Mammary epithelial cell (primary cell): ENCODE measurements at regions of chr9 and their contacts with region 1.

Region 1: DNA sequence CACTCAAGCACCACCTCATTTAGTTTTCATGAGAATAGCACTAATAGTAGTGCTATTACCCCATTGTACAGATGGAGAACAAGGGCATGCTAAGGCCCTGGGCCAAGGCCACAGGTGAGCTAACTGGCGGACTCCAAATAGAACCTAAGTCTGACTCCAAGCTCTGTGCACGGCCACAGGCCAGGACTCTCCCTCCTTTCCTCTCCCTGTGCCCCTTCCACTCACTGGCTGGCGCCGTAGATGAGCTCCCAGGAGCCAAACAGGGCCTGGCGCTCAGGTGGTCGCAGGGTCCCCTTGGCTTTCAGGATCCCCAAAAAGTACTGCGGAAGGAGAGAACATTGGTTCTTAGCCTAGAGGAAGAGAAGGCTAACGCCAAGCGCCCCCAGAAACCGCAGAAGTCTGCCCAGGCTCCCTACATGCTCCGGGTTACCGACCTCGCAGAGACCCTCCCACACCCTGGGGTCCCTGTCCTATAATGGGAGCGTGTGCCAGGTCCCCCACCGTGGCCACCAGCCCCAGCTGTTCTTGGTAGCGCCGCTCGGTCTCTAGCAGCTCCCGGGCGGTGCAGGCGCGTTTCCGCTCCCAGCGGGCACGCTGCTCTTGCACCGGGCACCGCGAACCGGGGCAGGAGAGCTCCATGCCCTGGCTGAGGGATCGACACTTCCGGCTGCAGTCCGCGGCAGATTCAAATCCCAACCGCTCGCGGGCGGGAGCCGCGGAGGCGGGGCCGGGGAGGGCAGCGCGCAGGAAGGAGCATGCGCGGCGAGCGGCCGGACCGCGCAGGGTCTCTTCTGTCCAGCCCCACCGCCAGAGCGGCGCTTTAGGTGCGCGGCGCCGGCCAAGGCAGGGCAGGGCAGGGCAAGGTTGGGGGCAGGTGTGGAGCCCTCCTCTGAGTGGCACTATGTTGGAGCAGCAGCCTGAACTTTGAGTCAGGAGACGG is at the start of gene ARHGEF39:
- DNase-seq: peak; percentile 79
- H3K4me3 ChIP-seq: peak within 1 kb of the TSS; percentile 32 to 77 (median 63)
- H3K27ac ChIP-seq: peak within 1 kb of the TSS; percentile 50
- H3K4me1 ChIP-seq: peaks cover 39% of the 10 kb centered on the region
- H3K27me3 ChIP-seq: no peaks in the 10 kb centered on the region
- CTCF ChIP-seq: peak in 1 of 2 donors; percentile 16
- total RNA-seq, gene ARHGEF39: 0.33 to 5.7 TPM

Region 2: DNA sequence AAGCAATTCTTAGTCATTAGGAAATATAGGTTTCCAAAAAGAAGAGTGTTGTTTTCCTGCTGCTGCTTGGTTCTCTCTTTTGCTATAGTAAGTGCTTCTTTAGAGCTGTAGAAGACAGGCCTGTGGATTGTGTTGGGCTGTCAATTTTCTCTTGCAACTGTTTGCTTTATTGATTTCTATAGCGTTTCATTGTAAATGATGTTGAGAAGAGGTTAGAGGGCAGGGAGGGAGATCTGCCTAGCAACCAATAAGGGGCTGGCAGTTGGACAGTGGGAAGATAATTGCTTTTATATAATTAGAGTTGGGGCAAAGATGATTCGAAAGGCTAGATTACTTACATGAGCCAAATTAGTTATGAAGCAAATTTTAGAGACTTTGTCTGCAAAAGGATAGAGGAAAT is 491.9 kb before region 1 on chr9:
- CTCF ChIA-PET with region 1: no interaction called
- dilution Hi-C with region 1: no loop called
- in situ Hi-C with region 1: no loop called
- intact Hi-C with region 1: no loop called
- DNase-seq: no peak
- H3K4me3 ChIP-seq: no peak overlapping the region
- H3K27ac ChIP-seq: no peak overlapping the region
- H3K4me1 ChIP-seq: no peaks in the 10 kb centered on the region
- H3K27me3 ChIP-seq: no peaks in the 10 kb centered on the region
- CTCF ChIP-seq: no peak

Region 3: GRCh38 chr9:35616681-35617459 is 47.9 kb before region 1 on chr9:
- CTCF ChIA-PET with region 1: no interaction called
- dilution Hi-C with region 1: no loop called
- in situ Hi-C with region 1: no loop called
- intact Hi-C with region 1: no loop called
- DNase-seq: peak; percentile 40
- H3K4me3 ChIP-seq: peak overlapping the region in 2 of 3 experiments; percentile 17 to 39
- H3K27ac ChIP-seq: no peak overlapping the region
- H3K4me1 ChIP-seq: no peaks in the 10 kb centered on the region
- H3K27me3 ChIP-seq: peaks cover 2% of the 10 kb centered on the region
- CTCF ChIP-seq: no peak

Region 4: DNA sequence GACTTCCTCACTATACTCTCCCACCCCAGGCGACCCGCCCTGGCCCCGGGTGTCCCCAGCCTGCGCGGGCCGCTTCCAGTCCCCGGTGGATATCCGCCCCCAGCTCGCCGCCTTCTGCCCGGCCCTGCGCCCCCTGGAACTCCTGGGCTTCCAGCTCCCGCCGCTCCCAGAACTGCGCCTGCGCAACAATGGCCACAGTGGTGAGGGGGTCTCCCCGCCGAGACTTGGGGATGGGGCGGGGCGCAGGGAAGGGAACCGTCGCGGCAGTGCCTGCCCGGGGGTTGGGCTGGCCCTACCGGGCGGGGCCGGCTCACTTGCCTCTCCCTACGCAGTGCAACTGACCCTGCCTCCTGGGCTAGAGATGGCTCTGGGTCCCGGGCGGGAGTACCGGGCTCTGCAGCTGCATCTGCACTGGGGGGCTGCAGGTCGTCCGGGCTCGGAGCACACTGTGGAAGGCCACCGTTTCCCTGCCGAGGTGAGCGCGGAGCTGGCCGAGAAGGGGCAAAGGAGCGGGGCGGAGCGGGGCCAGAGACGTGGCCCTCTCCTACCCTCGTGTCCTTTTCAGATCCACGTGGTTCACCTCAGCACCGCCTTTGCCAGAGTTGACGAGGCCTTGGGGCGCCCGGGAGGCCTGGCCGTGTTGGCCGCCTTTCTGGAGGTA is 11.1 kb after region 1 on chr9:
- CTCF ChIA-PET with region 1: no interaction called
- dilution Hi-C with region 1: no loop called
- in situ Hi-C with region 1: no loop called
- intact Hi-C with region 1: loop called (anchors 1 kb)
- DNase-seq: no peak
- H3K4me3 ChIP-seq: peak overlapping the region in 2 of 3 experiments; percentile 35 to 45
- H3K27ac ChIP-seq: no peak overlapping the region
- H3K4me1 ChIP-seq: peaks cover 23% of the 10 kb centered on the region
- H3K27me3 ChIP-seq: no peaks in the 10 kb centered on the region
- CTCF ChIP-seq: no peak

Region 5: GRCh38 chr9:35689601-35690430 is 25.0 kb after region 1 on chr9 and contains the start of gene TPM2:
- CTCF ChIA-PET with region 1: interaction called, 4 read pairs
- dilution Hi-C with region 1: no loop called
- in situ Hi-C with region 1: no loop called
- intact Hi-C with region 1: loop called (anchors 2 kb)
- DNase-seq: peak; percentile 55
- H3K4me3 ChIP-seq: peak within 1 kb of the TSS; percentile 47 to 70 (median 69)
- H3K27ac ChIP-seq: peak within 1 kb of the TSS; percentile 72
- H3K4me1 ChIP-seq: peaks cover 18% of the 10 kb centered on the region
- H3K27me3 ChIP-seq: no peaks in the 10 kb centered on the region
- CTCF ChIP-seq: no peak
- total RNA-seq, gene TPM2: 134 to 649 TPM